Dendritic cell treated with granulocyte-macrophage colony-stimulating factor and Interleukin-4, amounts not matched to agents 40 ng/mL and 50 ng/mL, for 4 days (primary cell): ENCODE measurements at regions of chr1 and their contacts with region 1.

Region 1: DNA sequence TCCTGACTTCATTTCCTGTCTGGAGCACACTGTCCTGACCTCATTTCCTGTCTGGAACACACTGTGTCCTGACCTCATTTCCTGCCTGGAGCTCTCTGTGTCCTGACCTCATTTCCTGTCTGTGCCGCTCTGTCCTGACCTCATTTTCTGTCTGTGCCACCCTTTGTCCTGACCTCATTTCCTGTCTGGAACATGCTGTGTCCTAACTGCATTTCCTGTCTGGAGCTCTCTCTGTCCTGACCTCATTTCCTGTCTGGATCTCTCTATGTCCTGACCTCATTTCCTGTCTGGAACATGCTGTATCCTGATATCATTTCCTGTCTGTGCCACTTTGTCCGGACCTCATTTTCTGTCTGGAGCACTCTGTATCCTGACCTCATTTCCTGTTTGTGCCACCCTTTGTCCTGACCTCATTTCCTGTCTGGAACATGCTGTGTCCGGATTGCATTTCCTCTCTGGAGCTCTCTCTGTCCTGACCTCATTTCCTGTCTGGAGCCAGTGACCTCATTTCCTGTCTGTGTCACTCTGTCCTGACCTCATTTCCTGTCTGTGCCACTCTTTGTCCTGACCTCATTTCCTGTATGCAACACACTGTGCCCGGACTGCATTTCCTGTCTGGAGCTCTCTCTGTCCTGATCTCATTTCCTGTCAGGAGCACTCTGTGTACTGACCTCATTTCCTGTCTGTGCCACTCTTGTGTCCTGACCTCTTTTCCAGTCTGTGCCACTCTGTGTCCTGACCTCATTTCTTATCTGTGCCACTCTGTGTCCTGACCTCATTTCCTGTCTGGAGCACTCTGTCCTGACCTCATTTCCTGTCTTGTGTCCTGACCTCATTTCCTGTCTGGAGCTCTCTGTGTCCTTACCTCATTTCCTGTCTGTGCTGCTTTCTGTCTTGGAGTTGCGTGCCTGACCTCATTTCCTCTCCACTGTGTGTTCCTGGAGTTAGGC is 27.6 kb downstream of the SKI start:
- H3K4me3 Mint-ChIP-seq: no peak overlapping the region
- H3K27ac Mint-ChIP-seq: no peak overlapping the region
- H3K4me1 Mint-ChIP-seq: peaks cover 60% of the 10 kb centered on the region
- H3K27me3 Mint-ChIP-seq: no peaks in the 10 kb centered on the region

Region 2: GRCh38 chr1:2314803-2315673 is 59.3 kb after region 1 on chr1:
- intact Hi-C with region 1: loop called (anchors 2 kb)
- H3K4me3 Mint-ChIP-seq: peak overlapping the region; percentile 64
- H3K27ac Mint-ChIP-seq: peak overlapping the region; percentile 87
- H3K4me1 Mint-ChIP-seq: peaks cover 55% of the 10 kb centered on the region
- H3K27me3 Mint-ChIP-seq: peaks cover 16% of the 10 kb centered on the region